ENCODE measurements at regions of chr1 and their contacts with region 1.

Region 1: GRCh38 chr1:198088360-198089071 is 68.3 kb upstream of the NEK7 start:
- DNase-seq: no peak
- H3K4me3 ChIP-seq: no peak overlapping the region
- H3K27ac ChIP-seq: no peak overlapping the region
- H3K27me3 ChIP-seq: no peaks in the 10 kb centered on the region
- CTCF ChIP-seq: peak; percentile 70

Region 2: GRCh38 chr1:197799271-197799670 is 289.2 kb before region 1 on chr1:
- CTCF ChIA-PET with region 1: no interaction called
- POLR2A ChIA-PET with region 1: no interaction called
- DNase-seq: no peak
- H3K4me3 ChIP-seq: no peak overlapping the region
- H3K27ac ChIP-seq: peak overlapping the region; percentile 73
- H3K27me3 ChIP-seq: no peaks in the 10 kb centered on the region
- CTCF ChIP-seq: no peak

Region 3: DNA sequence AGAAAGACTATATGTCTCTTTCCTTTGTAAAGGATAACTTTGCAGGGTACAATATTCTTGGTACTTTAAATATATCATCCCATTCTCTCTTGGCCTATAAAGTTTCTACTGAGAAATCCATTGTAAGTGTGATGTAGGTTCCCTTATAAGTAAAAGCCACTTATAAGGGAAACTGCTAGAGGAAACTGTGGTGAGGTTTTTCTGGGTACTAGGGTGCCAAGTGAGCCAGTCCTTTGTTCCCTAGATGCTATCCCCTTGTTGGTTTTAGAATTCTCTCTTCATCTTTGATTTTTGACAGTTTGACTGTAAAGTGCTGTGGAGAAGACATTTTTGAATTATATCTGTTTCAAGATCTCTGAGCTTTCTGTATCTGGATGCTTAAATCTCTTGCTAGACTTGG is 40.6 kb before region 1 on chr1:
- CTCF ChIA-PET with region 1: no interaction called
- POLR2A ChIA-PET with region 1: no interaction called
- DNase-seq: no peak
- H3K4me3 ChIP-seq: no peak overlapping the region
- H3K27ac ChIP-seq: no peak overlapping the region
- H3K27me3 ChIP-seq: no peaks in the 10 kb centered on the region
- CTCF ChIP-seq: no peak

Region 4: GRCh38 chr1:198075296-198075695 is 13.2 kb before region 1 on chr1:
- CTCF ChIA-PET with region 1: interaction called, 10 read pairs
- POLR2A ChIA-PET with region 1: no interaction called
- DNase-seq: no peak
- H3K4me3 ChIP-seq: no peak overlapping the region
- H3K27ac ChIP-seq: no peak overlapping the region
- H3K27me3 ChIP-seq: no peaks in the 10 kb centered on the region
- CTCF ChIP-seq: no peak

Region 5: GRCh38 chr1:198102454-198102827 is 13.9 kb after region 1 on chr1:
- CTCF ChIA-PET with region 1: interaction called, 15 read pairs
- POLR2A ChIA-PET with region 1: no interaction called
- DNase-seq: no peak
- H3K4me3 ChIP-seq: no peak overlapping the region
- H3K27ac ChIP-seq: no peak overlapping the region
- H3K27me3 ChIP-seq: no peaks in the 10 kb centered on the region
- CTCF ChIP-seq: no peak

Region 6: GRCh38 chr1:198153103-198153502 is 64.6 kb after region 1 on chr1:
- CTCF ChIA-PET with region 1: interaction called, 12 read pairs
- POLR2A ChIA-PET with region 1: no interaction called
- DNase-seq: no peak
- H3K4me3 ChIP-seq: no peak overlapping the region
- H3K27ac ChIP-seq: no peak overlapping the region
- H3K27me3 ChIP-seq: no peaks in the 10 kb centered on the region
- CTCF ChIP-seq: no peak

Region 7: GRCh38 chr1:198465201-198466144 is 377.0 kb after region 1 on chr1:
- CTCF ChIA-PET with region 1: interaction called, 23 read pairs
- POLR2A ChIA-PET with region 1: no interaction called
- DNase-seq: peak; percentile 41
- H3K4me3 ChIP-seq: no peak overlapping the region
- H3K27ac ChIP-seq: no peak overlapping the region
- H3K27me3 ChIP-seq: no peaks in the 10 kb centered on the region
- CTCF ChIP-seq: peak; percentile 65

Measured in AG04450 (cell line).